CD8-positive, alpha-beta T cell (primary cell): ENCODE measurements at regions of chr19 and their contacts with region 1.

Region 1: DNA sequence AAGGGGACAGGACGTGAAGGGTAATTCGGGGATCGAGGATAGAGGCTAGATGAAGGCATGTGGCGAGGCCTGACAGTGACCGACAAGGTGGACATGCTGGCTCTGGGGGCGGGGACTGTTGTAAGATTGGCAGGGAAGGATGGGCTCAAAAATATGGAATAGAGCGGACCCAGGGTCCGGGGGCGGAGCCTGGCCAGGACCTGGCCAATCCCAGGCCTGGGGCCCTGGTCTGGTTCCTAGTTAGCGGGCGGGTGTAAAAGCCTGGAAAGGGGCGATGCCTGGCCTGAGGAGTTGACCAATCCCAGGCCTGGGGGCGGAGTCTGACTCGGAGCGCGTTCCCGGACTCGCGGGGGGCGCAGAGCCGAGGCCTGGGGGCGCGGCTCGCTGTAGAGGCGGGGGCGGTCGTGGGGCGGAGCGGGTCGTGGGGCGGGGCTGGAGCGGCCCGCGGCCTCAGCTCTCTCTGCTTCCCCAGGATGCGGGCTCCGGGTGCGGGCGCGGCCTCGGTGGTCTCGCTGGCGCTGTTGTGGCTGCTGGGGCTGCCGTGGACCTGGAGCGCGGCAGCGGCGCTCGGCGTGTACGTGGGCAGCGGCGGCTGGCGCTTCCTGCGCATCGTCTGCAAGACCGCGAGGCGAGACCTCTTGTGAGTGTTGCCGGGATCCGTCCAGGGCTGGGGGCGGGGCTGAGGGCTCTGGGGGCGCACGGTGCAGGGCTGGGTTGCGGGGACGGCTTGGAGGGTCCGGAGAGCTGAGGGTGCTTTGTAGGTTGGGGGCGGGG is at the start of gene SLC27A1:
- DNase-seq: peak; percentile 77 to 96 (median 91)
- ATAC-seq: peak; percentile 74
- H3K4me3 ChIP-seq: peak within 1 kb of the TSS; percentile 62 to 86
- H3K4me3 Mint-ChIP-seq: peak within 1 kb of the TSS; percentile 93
- H3K27ac ChIP-seq: peak within 1 kb of the TSS; percentile 45 to 80
- H3K27ac Mint-ChIP-seq: peak within 1 kb of the TSS; percentile 89
- H3K4me1 ChIP-seq: peaks cover 22% of the 10 kb centered on the region
- H3K4me1 Mint-ChIP-seq: peaks cover 33% of the 10 kb centered on the region
- H3K27me3 ChIP-seq: no peaks in the 10 kb centered on the region
- H3K27me3 Mint-ChIP-seq: no peaks in the 10 kb centered on the region
- CTCF ChIP-seq: no peak
- total RNA-seq, gene SLC27A1: 8.1 to 9.4 TPM

Region 2: DNA sequence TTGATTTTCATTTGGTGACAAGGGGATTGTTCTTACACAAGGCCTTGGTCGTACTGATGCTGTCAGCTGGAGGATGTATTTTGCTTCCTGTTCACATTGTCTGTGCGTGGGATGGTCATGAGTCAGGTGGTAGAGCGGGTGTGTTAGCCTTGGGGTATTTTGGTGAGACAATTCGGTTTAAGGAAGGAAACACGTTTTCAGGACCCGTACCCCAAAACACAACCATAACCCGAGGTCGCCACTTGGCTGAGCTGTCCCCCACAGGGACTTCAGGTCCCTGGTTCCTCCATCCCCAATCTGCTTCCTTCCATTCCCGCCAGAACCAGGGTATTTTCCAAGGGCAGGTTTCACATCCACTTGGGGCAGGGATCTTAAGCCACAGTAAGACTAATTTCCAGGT is 379.7 kb before region 1 on chr19:
- CTCF ChIA-PET with region 1: no interaction called
- POLR2A ChIA-PET with region 1: no interaction called
- intact Hi-C with region 1: no loop called
- DNase-seq: peak in 4 of 9 experiments; percentile 25 to 64 (median 38)
- ATAC-seq: peak; percentile 82
- H3K4me3 ChIP-seq: no peak overlapping the region
- H3K4me3 Mint-ChIP-seq: peak overlapping the region; percentile 6
- H3K27ac ChIP-seq: peak overlapping the region in 1 of 2 experiments; percentile 36
- H3K27ac Mint-ChIP-seq: peak overlapping the region; percentile 79
- H3K4me1 ChIP-seq: peaks cover 34% of the 10 kb centered on the region
- H3K4me1 Mint-ChIP-seq: peaks cover 66% of the 10 kb centered on the region
- H3K27me3 ChIP-seq: no peaks in the 10 kb centered on the region
- H3K27me3 Mint-ChIP-seq: no peaks in the 10 kb centered on the region
- CTCF ChIP-seq: no peak

Region 3: DNA sequence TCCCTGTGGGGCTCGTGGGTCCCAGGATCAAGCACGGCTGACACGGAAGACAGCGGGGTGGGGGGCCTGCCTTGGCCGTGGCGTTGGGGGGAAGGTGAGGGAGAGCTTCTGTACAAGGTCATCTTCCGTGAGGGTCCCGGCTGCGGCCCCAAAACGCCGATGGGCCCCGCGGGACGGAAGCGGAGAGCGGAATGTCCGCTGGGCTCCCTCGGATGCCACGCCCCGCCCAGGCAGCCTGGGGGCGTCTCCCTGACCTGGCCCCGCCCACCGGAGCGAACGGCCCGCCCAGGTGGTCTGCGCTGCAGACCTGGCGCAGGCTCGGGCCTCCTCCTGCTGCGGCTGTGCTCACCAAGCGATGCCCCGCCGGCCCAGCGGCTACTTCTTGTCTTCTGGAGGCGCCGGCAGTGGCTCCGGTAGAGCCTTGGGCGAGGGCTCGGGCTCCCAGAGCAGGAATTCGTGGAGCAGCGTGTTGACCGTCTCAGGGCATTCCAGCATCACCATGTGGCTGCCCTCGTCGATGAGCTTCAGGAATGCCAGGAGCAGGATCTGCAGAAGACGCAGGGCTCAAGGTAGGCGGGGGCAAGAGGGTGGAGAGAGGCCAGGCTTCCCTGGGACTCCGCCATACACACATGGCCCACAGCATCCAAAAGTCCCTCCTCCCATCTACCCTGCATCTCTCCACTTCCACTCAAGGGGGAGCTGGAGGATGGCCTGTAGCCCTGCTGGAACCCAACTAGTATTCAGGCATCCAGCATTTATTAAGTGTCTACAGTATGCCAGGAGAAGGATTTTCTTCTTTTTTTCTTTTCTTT is 177.8 kb before region 1 on chr19:
- CTCF ChIA-PET with region 1: interaction called, 3 read pairs
- POLR2A ChIA-PET with region 1: no interaction called
- intact Hi-C with region 1: loop called in 1 of 2 experiments (anchors 1 kb)
- DNase-seq: peak; percentile 61 to 90 (median 81)
- ATAC-seq: peak; percentile 96
- H3K4me3 ChIP-seq: peak overlapping the region; percentile 73 to 94
- H3K4me3 Mint-ChIP-seq: peak overlapping the region; percentile 86
- H3K27ac ChIP-seq: no peak overlapping the region
- H3K27ac Mint-ChIP-seq: peak overlapping the region; percentile 77
- H3K4me1 ChIP-seq: peaks cover 5% of the 10 kb centered on the region
- H3K4me1 Mint-ChIP-seq: peaks cover 6% of the 10 kb centered on the region
- H3K27me3 ChIP-seq: no peaks in the 10 kb centered on the region
- H3K27me3 Mint-ChIP-seq: peaks cover 3% of the 10 kb centered on the region
- CTCF ChIP-seq: peak; percentile 82

Region 4: GRCh38 chr19:17419621-17420466 is 50.4 kb before region 1 on chr19 and contains the start of gene MVB12A:
- CTCF ChIA-PET with region 1: interaction called, 6 read pairs
- POLR2A ChIA-PET with region 1: interaction called, 3 read pairs
- intact Hi-C with region 1: loop called (anchors 1 kb)
- DNase-seq: peak; percentile 90 to 100 (median 96)
- ATAC-seq: peak; percentile 98
- H3K4me3 ChIP-seq: peak within 1 kb of the TSS; percentile 69 to 76
- H3K4me3 Mint-ChIP-seq: peak within 1 kb of the TSS; percentile 89
- H3K27ac ChIP-seq: peak within 1 kb of the TSS; percentile 47 to 51
- H3K27ac Mint-ChIP-seq: peak within 1 kb of the TSS; percentile 80
- H3K4me1 ChIP-seq: peaks cover 19% of the 10 kb centered on the region
- H3K4me1 Mint-ChIP-seq: peaks cover 18% of the 10 kb centered on the region
- H3K27me3 ChIP-seq: no peaks in the 10 kb centered on the region
- H3K27me3 Mint-ChIP-seq: no peaks in the 10 kb centered on the region
- CTCF ChIP-seq: no peak
- total RNA-seq, gene MVB12A: 9.1 to 10.4 TPM

Region 5: GRCh38 chr19:17448131-17448967 is 21.9 kb before region 1 on chr19 and contains the start of gene TMEM221:
- CTCF ChIA-PET with region 1: interaction called, 7 read pairs
- POLR2A ChIA-PET with region 1: no interaction called
- intact Hi-C with region 1: loop called (anchors 1 kb)
- DNase-seq: peak; percentile 16 to 76 (median 59)
- ATAC-seq: peak; percentile 81
- H3K4me3 ChIP-seq: peak within 1 kb of the TSS in 1 of 2 experiments; percentile 15
- H3K4me3 Mint-ChIP-seq: peak within 1 kb of the TSS; percentile 53
- H3K27ac ChIP-seq: no peak within 1 kb of the TSS
- H3K27ac Mint-ChIP-seq: no peak within 1 kb of the TSS
- H3K4me1 ChIP-seq: no peaks in the 10 kb centered on the region
- H3K4me1 Mint-ChIP-seq: peaks cover 11% of the 10 kb centered on the region
- H3K27me3 ChIP-seq: peaks cover 3 to 20% of the 10 kb centered on the region in 2 experiments
- H3K27me3 Mint-ChIP-seq: peaks cover 17% of the 10 kb centered on the region
- CTCF ChIP-seq: peak; percentile 61
- total RNA-seq, gene TMEM221: not detected

Region 6: GRCh38 chr19:17496337-17496997 is 26.2 kb after region 1 on chr19:
- CTCF ChIA-PET with region 1: interaction called, 42 read pairs
- POLR2A ChIA-PET with region 1: no interaction called
- intact Hi-C with region 1: no loop called
- DNase-seq: peak; percentile 63 to 90 (median 80)
- ATAC-seq: peak; percentile 99
- H3K4me3 ChIP-seq: no peak overlapping the region
- H3K4me3 Mint-ChIP-seq: no peak overlapping the region
- H3K27ac ChIP-seq: no peak overlapping the region
- H3K27ac Mint-ChIP-seq: no peak overlapping the region
- H3K4me1 ChIP-seq: peaks cover 21% of the 10 kb centered on the region
- H3K4me1 Mint-ChIP-seq: peaks cover 27% of the 10 kb centered on the region
- H3K27me3 ChIP-seq: no peaks in the 10 kb centered on the region
- H3K27me3 Mint-ChIP-seq: no peaks in the 10 kb centered on the region
- CTCF ChIP-seq: peak; percentile 90

Region 7: GRCh38 chr19:17539238-17540117 is 69.2 kb after region 1 on chr19:
- CTCF ChIA-PET with region 1: no interaction called
- POLR2A ChIA-PET with region 1: no interaction called
- intact Hi-C with region 1: loop called (anchors 1 kb)
- DNase-seq: peak; percentile 83 to 99 (median 96)
- ATAC-seq: peak; percentile 99
- H3K4me3 ChIP-seq: peak overlapping the region; percentile 56 to 63
- H3K4me3 Mint-ChIP-seq: peak overlapping the region; percentile 90
- H3K27ac ChIP-seq: peak overlapping the region; percentile 28 to 37
- H3K27ac Mint-ChIP-seq: peak overlapping the region; percentile 78
- H3K4me1 ChIP-seq: peaks cover 8% of the 10 kb centered on the region
- H3K4me1 Mint-ChIP-seq: peaks cover 11% of the 10 kb centered on the region
- H3K27me3 ChIP-seq: no peaks in the 10 kb centered on the region
- H3K27me3 Mint-ChIP-seq: no peaks in the 10 kb centered on the region
- CTCF ChIP-seq: no peak